Thyroid gland (tissue), 4 donors: ENCODE measurements at regions of chr16 and their contacts with region 1.

Region 1: DNA sequence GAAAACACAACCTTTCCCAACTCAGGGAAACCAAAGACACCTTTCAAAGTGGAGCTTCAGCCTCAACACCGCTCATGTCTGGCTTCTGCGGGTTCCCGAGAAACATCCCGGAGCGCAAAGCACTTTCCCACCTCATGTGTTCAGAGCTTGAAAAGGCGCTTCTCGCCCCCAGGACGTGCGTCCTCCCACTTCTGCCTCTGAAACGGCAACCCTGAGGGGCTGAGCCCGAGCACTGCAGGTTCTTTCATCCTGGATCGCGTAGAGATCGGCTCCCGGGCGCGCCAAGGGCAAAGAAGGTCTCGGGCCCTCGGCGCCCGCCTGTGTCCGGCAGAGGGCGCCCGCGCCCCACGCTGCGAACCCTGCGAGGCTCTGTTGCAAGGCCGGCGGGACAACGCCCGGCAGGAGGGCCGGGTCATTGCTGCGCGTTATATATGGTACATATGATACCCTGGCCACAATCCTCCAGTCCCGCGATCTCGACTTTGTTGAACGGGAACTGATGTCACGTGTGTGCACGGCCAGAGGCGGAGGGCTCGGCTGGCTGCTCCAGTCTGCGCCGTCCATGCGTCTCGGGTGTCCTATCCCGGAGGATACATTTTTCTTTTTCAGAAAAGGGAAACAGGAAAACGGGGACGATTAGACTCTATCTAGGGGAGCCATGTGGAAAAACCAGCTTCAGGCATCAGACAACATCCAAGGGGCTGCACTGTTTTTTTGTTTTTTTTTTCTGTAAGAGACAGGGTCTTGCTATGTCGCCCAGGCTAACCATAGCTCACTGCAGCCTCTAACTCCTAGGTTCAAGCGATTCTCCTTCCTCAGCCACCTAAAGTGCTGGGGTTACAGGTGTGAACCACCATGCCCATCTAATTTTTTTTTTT is 19.1 kb downstream of the COQ7 start:
- DNase-seq: peak; percentile 72 to 80
- H3K4me3 ChIP-seq: peak overlapping the region in 2 of 3 donors; percentile 26 to 27
- H3K27ac ChIP-seq: no peak overlapping the region
- H3K4me1 ChIP-seq: peaks cover 6 to 9% of the 10 kb centered on the region in 2 donors
- H3K27me3 ChIP-seq: no peaks in the 10 kb centered on the region
- CTCF ChIP-seq: peak; percentile 75 to 98 (median 96)
- POLR2A ChIP-seq: no peak

Region 2: GRCh38 chr16:19029980-19030379 is 56.6 kb before region 1 on chr16:
- intact Hi-C with region 1: no loop called
- DNase-seq: no peak
- H3K4me3 ChIP-seq: no peak overlapping the region
- H3K27ac ChIP-seq: no peak overlapping the region
- H3K4me1 ChIP-seq: no peaks in the 10 kb centered on the region
- H3K27me3 ChIP-seq: no peaks in the 10 kb centered on the region
- CTCF ChIP-seq: no peak
- POLR2A ChIP-seq: no peak

Region 3: GRCh38 chr16:19167710-19168370 is 81.3 kb after region 1 on chr16 and contains the start of gene SYT17:
- intact Hi-C with region 1: loop called (anchors 5 kb)
- DNase-seq: peak; percentile 68 to 74
- H3K4me3 ChIP-seq: peak within 1 kb of the TSS in 2 of 3 donors; percentile 54 to 76
- H3K27ac ChIP-seq: peak within 1 kb of the TSS in 2 of 3 donors; percentile 56 to 77
- H3K4me1 ChIP-seq: peaks cover 9 to 10% of the 10 kb centered on the region in 2 donors
- H3K27me3 ChIP-seq: no peaks in the 10 kb centered on the region
- CTCF ChIP-seq: peak; percentile 26 to 92 (median 58)
- POLR2A ChIP-seq: no peak
- total RNA-seq, gene SYT17: 2.8 to 17.2 (median 8.6) TPM

Region 4: GRCh38 chr16:19179546-19180490 is 93.3 kb after region 1 on chr16:
- intact Hi-C with region 1: loop called (anchors 5 kb)
- DNase-seq: peak; percentile 27 to 41
- H3K4me3 ChIP-seq: no peak overlapping the region
- H3K27ac ChIP-seq: no peak overlapping the region
- H3K4me1 ChIP-seq: peaks cover 0 to 5% of the 10 kb centered on the region in 2 donors
- H3K27me3 ChIP-seq: no peaks in the 10 kb centered on the region
- CTCF ChIP-seq: peak in 5 of 6 experiments; percentile 13 to 56 (median 42)
- POLR2A ChIP-seq: no peak

Region 5: GRCh38 chr16:19375561-19376158 is 289.1 kb after region 1 on chr16:
- intact Hi-C with region 1: loop called (anchors 5 kb)
- DNase-seq: peak; percentile 43 to 50
- H3K4me3 ChIP-seq: no peak overlapping the region
- H3K27ac ChIP-seq: no peak overlapping the region
- H3K4me1 ChIP-seq: peaks cover 13 to 14% of the 10 kb centered on the region in 2 donors
- H3K27me3 ChIP-seq: no peaks in the 10 kb centered on the region
- CTCF ChIP-seq: peak; percentile 72 to 95 (median 88)
- POLR2A ChIP-seq: no peak

Region 6: DNA sequence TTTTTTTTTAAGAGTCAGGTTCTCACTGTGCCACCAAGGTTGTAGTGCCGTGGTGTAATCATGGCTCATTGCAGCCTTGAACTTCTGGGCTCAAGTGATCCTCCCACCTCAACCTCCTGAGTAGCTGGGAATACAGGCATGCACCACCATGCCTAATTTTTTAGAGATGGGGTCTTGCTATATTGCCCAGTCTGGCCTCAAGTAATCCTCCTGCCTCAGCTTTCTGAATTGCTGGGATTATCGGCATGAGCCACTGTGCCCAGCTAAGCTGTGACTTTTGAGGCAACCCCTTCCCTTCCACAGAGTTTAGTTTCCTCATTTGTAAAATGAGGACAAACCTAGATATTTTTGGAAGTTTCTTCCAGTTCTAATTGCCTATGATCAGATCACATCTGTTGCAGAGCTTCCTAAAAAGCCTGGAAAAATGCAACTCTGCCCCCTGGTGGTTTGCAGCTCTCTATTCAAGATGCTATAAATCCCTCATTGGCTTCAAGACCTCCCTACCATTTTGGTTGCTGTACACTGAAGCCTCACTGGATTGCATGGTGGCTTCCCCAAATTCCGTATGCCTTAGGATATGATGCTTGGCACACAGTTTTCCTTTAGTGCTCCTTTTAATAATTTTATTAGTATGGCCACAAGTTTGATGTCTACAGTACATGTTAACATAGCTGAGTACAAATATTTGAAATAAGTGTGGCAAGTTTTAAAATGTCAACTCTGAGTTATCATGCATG is 416.0 kb after region 1 on chr16:
- intact Hi-C with region 1: loop called (anchors 10 kb)
- DNase-seq: peak; percentile 74 to 86
- H3K4me3 ChIP-seq: no peak overlapping the region
- H3K27ac ChIP-seq: no peak overlapping the region
- H3K4me1 ChIP-seq: peaks cover 14 to 17% of the 10 kb centered on the region in 2 donors
- H3K27me3 ChIP-seq: no peaks in the 10 kb centered on the region
- CTCF ChIP-seq: peak; percentile 53 to 78 (median 66)
- POLR2A ChIP-seq: no peak